ENCODE measurements at regions of chr14 and their contacts with region 1.

Region 1: GRCh38 chr14:64338616-64339316 is 44.6 kb upstream of the ESR2 start:
- DNase-seq: peak; percentile 96 to 98
- H3K4me3 ChIP-seq: peak overlapping the region; percentile 82 to 89
- H3K27ac ChIP-seq: peak overlapping the region; percentile 82 to 89
- H3K4me1 ChIP-seq: peaks cover 0 to 15% (median 0%) of the 10 kb centered on the region in 4 donors
- H3K27me3 ChIP-seq: no peaks in the 10 kb centered on the region
- CTCF ChIP-seq: no peak

Region 2: DNA sequence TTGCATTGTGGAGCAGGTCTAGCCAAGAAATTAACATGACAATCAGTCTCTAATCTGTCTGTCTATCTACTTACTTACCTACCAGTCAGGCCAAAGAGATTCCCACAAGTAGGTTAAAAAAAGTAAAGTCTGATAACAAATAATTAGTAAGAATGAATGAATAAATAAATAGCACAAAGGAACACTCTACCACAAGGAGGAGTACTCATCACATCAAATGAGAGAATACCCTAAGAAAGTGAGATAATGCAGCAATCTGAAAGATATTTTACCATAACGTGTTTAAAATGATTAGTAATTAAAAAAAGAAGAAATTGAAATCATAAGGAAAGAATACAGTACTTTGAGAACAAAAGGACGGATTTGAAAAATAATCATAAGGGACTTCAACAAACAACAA is 298.7 kb before region 1 on chr14:
- intact Hi-C with region 1: loop called (anchors 10 kb)
- DNase-seq: no peak
- H3K4me3 ChIP-seq: no peak overlapping the region
- H3K27ac ChIP-seq: no peak overlapping the region
- H3K4me1 ChIP-seq: peaks cover 0 to 14% (median 0%) of the 10 kb centered on the region in 4 donors
- H3K27me3 ChIP-seq: no peaks in the 10 kb centered on the region
- CTCF ChIP-seq: peak in 1 of 2 experiments; percentile 25

Region 3: DNA sequence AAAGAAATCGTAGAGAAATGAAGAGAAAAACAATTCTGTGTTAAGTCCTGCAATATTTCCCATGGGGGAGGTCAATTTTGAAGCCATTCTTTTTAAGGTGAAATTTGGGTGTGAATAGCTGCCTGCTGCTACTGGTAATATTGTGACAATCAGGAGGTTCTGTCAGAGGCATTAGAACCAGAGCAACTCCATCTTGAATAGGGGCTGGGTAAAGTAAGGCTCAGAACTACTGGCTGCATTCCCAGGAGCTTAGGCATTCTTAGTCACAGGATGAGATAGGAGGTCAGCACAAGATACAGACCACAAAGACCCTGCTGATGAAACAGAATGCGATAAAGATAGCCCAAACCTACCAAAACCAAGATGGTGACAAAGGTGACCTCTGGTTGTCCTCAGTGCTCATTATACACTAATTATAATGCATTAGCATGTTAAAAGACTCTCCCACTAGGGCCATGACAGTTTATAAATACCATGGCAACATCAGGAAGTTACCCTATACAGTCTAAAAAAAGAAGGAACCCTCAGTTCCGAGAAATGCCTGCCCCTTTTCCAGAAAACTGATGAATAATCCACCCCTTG is 24.6 kb after region 1 on chr14:
- intact Hi-C with region 1: no loop called
- DNase-seq: no peak
- H3K4me3 ChIP-seq: no peak overlapping the region
- H3K27ac ChIP-seq: no peak overlapping the region
- H3K4me1 ChIP-seq: no peaks in the 10 kb centered on the region
- H3K27me3 ChIP-seq: no peaks in the 10 kb centered on the region
- CTCF ChIP-seq: no peak

Region 4: GRCh38 chr14:64421166-64421565 is 82.4 kb after region 1 on chr14:
- intact Hi-C with region 1: no loop called
- DNase-seq: no peak
- H3K4me3 ChIP-seq: no peak overlapping the region
- H3K27ac ChIP-seq: no peak overlapping the region
- H3K4me1 ChIP-seq: no peaks in the 10 kb centered on the region
- H3K27me3 ChIP-seq: no peaks in the 10 kb centered on the region
- CTCF ChIP-seq: no peak

Region 5: DNA sequence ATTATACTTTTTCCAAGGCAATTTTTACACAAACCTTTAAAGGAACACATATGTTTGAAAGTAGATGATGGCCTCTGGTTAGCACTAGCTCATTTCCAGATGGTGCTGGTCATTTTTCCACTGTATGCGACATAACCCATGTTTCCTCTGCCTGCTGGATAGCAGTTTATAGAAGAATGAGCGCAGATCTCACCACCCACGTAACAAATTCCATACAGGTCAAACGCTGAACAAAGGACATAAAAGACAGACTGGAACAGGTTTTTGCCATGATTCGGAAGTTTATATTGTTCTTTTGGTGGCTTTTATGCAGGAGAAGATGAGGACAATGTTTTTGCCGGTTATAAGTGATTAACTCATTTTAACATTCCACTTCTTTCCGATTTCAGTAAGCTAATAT is 241.7 kb after region 1 on chr14:
- intact Hi-C with region 1: no loop called
- DNase-seq: no peak
- H3K4me3 ChIP-seq: no peak overlapping the region
- H3K27ac ChIP-seq: no peak overlapping the region
- H3K4me1 ChIP-seq: no peaks in the 10 kb centered on the region
- H3K27me3 ChIP-seq: no peaks in the 10 kb centered on the region
- CTCF ChIP-seq: no peak